Dorsolateral prefrontal cortex (tissue), 120 donors: ENCODE measurements at regions of chr17 and their contacts with region 1.

Region 1: GRCh38 chr17:80832888-80833583 is 158.6 kb upstream of the CHMP6 start:
- DNase-seq: peak; percentile 63 to 95 (median 88)
- H3K4me3 ChIP-seq: peak overlapping the region; percentile 15 to 72 (median 52)
- H3K27ac ChIP-seq: peak overlapping the region; percentile 55 to 98 (median 94)
- H3K27me3 ChIP-seq: no peaks in the 10 kb centered on the region
- CTCF ChIP-seq: peak in 13 of 56 donors; percentile 10 to 37 (median 20)

Region 2: GRCh38 chr17:80755650-80756405 is 77.2 kb before region 1 on chr17:
- intact Hi-C with region 1: loop called (anchors 2 to 5 kb)
- DNase-seq: no peak
- H3K4me3 ChIP-seq: no peak overlapping the region
- H3K27ac ChIP-seq: no peak overlapping the region
- H3K27me3 ChIP-seq: no peaks in the 10 kb centered on the region
- CTCF ChIP-seq: peak in 8 of 56 donors; percentile 7 to 37 (median 18)

Region 3: DNA sequence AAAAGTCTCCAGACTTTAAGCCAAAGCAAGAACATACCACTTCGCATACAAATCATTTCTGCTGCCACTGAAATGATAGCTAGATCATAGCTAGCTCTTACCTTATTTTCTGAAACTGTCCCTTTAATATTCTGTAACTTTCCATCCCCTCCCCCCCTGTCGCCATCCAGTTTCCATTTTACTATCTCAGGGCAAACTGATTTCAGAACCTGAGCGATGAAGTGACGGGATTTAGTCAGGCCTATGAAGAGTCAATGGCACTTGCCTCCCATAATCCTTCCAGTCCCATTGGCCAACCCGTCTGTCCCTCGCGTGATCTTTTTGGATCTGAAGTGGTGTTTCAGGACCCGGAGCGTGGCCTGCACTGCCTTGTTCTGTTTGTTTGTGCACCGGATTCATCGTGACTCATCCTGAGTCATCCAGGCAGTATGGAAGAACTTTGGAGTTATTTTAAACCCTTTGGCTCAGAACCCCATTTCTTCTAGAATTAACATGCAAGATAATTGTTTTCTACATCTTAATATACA is 41.2 kb before region 1 on chr17:
- intact Hi-C with region 1: loop called (anchors 5 kb)
- DNase-seq: peak in 5 of 10 donors; percentile 37 to 84 (median 73)
- H3K4me3 ChIP-seq: peak overlapping the region in 15 of 59 donors; percentile 2 to 36 (median 20)
- H3K27ac ChIP-seq: peak overlapping the region in 56 of 59 donors; percentile 21 to 87 (median 74)
- H3K27me3 ChIP-seq: no peaks in the 10 kb centered on the region
- CTCF ChIP-seq: no peak

Region 4: GRCh38 chr17:80859324-80860150 is 26.5 kb after region 1 on chr17:
- intact Hi-C with region 1: loop called in 1 of 2 experiments (anchors 2 kb)
- DNase-seq: peak; percentile 62 to 82 (median 75)
- H3K4me3 ChIP-seq: peak overlapping the region in 11 of 59 donors; percentile 5 to 38 (median 15)
- H3K27ac ChIP-seq: peak overlapping the region in 50 of 59 donors; percentile 8 to 86 (median 55)
- H3K27me3 ChIP-seq: no peaks in the 10 kb centered on the region
- CTCF ChIP-seq: peak in 31 of 56 donors; percentile 8 to 56 (median 26)

Region 5: DNA sequence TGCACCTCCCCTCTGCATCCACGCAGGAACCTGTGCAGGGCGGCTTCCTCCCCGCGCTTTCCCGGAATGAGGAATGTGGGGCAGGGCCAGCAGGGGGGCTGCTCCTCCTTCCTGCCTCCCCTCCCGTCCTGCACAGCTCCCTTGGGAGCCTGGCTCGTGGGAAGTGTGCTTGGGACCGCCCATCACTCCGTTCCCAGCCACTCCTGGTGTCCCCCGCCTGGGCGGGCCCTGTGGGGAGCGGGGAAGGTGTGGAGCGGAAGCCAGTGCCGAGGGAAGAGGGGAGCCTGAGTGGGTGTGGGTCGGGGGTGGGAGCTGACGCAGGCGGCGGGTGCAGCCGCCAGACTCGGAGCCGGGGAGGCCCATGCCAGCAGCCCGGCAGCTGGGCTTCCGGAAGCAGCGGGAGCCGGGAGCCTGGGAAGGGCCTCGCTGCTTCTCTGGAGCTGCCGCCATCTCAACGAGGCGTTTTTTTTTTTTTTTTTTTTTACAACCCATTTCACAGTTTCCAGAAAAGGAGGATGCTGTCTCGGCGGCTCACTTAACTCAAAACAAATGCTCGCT is 586.4 kb after region 1 on chr17:
- intact Hi-C with region 1: no loop called
- DNase-seq: peak in 6 of 10 donors; percentile 58 to 85 (median 76)
- H3K4me3 ChIP-seq: peak overlapping the region in 53 of 59 donors; percentile 1 to 56 (median 39)
- H3K27ac ChIP-seq: peak overlapping the region; percentile 29 to 96 (median 85)
- H3K27me3 ChIP-seq: no peaks in the 10 kb centered on the region
- CTCF ChIP-seq: no peak